Activated B cell treated with CpG ODN at 0.5 μM for 24 hours (primary cell): ENCODE measurements at regions of chr17 and their contacts with region 1.

Region 1: DNA sequence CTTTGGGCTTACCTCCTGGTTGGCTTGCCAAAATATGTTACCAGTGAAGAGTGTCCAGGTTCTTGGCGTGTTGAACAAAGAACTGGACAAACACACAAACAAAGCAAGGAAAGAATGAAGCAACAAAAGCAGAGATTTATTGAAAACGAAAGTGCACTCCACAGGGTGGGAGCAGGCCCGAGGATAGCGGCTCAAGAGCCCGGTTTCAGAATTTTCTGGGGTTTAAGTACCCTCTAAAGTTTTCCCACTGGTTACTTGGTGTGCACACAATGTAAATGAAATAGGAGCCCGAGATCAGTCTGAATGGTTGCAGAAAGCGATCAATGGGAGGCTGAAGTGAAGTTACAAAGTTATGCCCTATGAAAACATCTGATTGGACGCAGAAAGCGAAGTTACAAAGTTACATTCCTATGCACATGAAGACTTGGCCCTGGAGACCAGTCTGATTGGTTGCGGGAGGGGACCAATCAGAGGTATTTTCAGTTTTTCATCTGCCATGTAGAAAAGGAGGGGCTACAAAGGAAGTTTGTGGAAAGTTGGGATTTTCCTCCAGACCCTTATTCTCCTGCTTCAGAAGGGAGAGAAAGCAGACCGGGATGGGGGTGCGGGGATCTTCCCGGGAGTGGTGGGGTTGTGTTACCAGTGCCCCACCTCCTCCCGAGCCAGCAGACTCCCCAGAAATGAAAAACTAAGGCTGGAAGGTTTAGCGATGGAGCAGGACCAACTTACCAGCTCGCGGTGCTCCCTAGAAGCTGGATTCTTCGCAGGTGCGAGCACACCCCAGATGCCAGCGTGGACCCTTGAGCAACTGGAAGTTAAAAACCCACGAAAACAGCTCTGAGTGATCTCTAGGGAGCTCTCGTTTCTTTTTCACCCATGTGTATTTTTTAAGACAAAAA is at the start of gene SLFN12:
- DNase-seq: peak; percentile 29
- ATAC-seq: peak; percentile 93
- H3K4me3 Mint-ChIP-seq: peak within 1 kb of the TSS; percentile 97
- H3K27ac Mint-ChIP-seq: peak within 1 kb of the TSS; percentile 92
- H3K4me1 Mint-ChIP-seq: peaks cover 31% of the 10 kb centered on the region
- H3K27me3 Mint-ChIP-seq: no peaks in the 10 kb centered on the region
- CTCF ChIP-seq: no peak
- total RNA-seq, gene SLFN12: 8.7 and 9.0 TPM in 2 replicates

Region 2: GRCh38 chr17:35373534-35373983 is 58.9 kb before region 1 on chr17 and contains the start of gene SLFN11:
- CTCF ChIA-PET with region 1: no interaction called
- POLR2A ChIA-PET with region 1: interaction called, 6 read pairs
- intact Hi-C with region 1: loop called (anchors 2 kb)
- DNase-seq: peak; percentile 55
- ATAC-seq: peak; percentile 76
- H3K4me3 Mint-ChIP-seq: peak within 1 kb of the TSS; percentile 99
- H3K27ac Mint-ChIP-seq: peak within 1 kb of the TSS; percentile 98
- H3K4me1 Mint-ChIP-seq: peaks cover 50% of the 10 kb centered on the region
- H3K27me3 Mint-ChIP-seq: no peaks in the 10 kb centered on the region
- CTCF ChIP-seq: no peak
- total RNA-seq, gene SLFN11: 19.2 and 22.4 TPM in 2 replicates

Region 3: DNA sequence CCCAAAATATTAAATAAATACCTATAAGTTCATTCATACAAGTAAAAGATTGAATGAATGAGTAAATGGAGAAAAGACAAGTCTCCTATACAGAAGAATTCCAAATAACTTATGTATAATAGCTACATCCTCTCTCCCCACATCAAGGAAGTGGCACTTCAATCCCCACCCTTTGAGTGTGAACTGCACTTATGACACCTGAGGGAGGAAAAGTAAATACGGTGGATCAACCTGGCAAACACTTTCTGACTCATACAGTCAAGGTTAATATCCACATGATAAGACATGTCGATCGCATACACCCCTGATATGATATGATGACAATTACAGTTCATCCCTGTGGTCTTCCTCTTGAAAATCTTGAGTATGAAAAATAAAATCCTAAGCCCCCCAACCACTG is 87.0 kb after region 1 on chr17:
- CTCF ChIA-PET with region 1: no interaction called
- POLR2A ChIA-PET with region 1: no interaction called
- intact Hi-C with region 1: no loop called
- DNase-seq: no peak
- ATAC-seq: no peak
- H3K4me3 Mint-ChIP-seq: no peak overlapping the region
- H3K27ac Mint-ChIP-seq: no peak overlapping the region
- H3K4me1 Mint-ChIP-seq: peaks cover 5% of the 10 kb centered on the region
- H3K27me3 Mint-ChIP-seq: peaks cover 44% of the 10 kb centered on the region
- CTCF ChIP-seq: no peak